Dorsolateral prefrontal cortex (tissue), 120 donors: ENCODE measurements at regions of chr14 and their contacts with region 1.

Region 1: DNA sequence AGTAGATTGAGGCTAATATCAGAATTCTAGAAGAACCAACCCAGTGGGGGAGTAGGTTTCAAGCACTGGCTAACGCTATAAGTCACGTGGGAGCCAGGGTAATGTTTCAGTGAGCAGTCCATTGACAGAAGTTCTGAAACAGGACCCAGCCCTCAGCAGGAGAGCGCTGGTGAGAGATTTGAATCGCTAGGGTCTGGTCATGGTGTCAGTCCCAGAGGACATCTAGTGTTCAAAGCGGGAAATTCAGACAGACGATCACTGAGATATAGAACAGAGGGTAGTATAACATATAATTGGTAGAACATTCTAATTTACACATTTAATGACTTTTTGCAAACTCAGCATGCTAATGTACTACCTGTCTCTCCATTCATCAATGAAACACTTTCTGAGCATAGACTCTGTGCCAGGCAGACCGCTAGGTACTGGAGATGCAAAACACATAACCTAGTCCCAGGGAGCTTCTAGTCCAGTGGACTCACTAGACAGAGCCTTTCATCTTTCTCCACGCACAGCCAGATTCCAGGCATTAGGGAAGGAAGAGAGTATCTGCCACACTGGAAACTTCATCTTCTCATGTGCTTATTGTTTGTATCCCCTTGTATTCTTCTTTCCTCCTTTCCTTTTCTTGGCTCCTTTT is 35.4 kb upstream of the RNASE3 start:
- DNase-seq: peak in 9 of 10 donors; percentile 17 to 76 (median 58)
- H3K4me3 ChIP-seq: no peak overlapping the region
- H3K27ac ChIP-seq: peak overlapping the region in 2 of 59 donors; percentile 36 to 45
- H3K27me3 ChIP-seq: peaks cover 0 to 14% (median 0%) of the 10 kb centered on the region in 45 donors
- CTCF ChIP-seq: peak; percentile 65 to 97 (median 89)

Region 2: DNA sequence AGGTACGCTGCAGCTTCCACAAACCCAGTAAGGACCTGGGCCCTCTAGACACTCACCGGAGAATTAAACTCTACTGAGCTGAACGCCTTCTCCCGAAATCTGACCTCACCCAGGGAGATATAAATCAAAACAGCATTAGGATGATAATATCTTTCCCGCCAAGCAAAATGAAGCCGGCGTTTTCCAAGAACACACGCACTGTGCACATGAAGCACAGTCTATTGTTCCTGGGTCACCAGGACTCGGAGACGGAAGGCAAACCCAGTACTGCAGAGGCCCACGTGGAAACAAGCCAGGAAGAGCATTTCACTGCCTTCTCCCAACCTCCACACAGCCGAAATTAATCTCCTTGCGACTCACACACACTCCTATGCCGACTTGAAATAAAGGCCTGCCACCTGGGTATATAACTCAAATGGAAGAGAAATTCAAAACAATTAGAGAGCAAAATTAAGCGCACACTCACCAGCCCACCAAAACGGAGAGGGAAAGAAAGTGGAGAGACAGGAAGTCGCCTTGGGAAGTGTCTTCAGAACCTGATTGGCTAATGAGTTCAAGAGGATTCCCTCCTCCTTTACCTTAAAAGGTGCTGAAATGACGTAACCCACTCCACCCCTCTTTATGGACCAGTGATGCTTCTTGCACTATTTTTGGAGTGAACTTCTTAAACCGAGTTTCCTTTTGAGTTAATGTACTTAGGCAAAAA is 522.8 kb before region 1 on chr14 and contains the start of gene CCNB1IP1:
- intact Hi-C with region 1: loop called in 1 of 2 experiments (anchors 10 kb)
- DNase-seq: peak in 7 of 10 donors; percentile 37 to 69 (median 47)
- H3K4me3 ChIP-seq: peak within 1 kb of the TSS; percentile 44 to 87 (median 74)
- H3K27ac ChIP-seq: peak within 1 kb of the TSS; percentile 44 to 93 (median 83)
- H3K27me3 ChIP-seq: no peaks in the 10 kb centered on the region
- CTCF ChIP-seq: peak in 7 of 56 donors; percentile 3 to 23 (median 12)
- total RNA-seq, gene CCNB1IP1: 23.9 to 53.0 (median 36.4) TPM

Region 3: DNA sequence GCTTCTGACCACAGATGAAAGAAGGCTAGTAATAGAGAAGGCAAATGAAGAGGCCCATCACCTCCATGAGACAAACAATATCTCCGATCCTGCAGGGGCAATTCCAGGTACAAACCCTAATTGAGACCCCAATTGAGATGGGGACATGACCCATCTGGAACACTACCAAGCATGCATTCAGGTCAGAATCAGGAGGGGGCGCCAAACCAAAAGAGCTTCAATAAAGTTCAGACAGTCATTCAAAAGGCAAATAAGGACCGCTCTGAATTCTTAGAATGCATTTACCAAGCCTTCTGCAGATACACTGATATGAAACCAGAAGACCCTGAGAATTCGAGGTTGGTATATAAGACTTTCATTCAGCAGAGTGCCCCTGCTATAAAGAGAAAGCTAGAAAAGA is 97.8 kb before region 1 on chr14:
- intact Hi-C with region 1: loop called in 1 of 2 experiments (anchors 5 kb)
- DNase-seq: peak in 3 of 10 donors; percentile 4 to 54 (median 15)
- H3K4me3 ChIP-seq: no peak overlapping the region
- H3K27ac ChIP-seq: no peak overlapping the region
- H3K27me3 ChIP-seq: peaks cover 0 to 6% (median 0%) of the 10 kb centered on the region in 45 donors
- CTCF ChIP-seq: peak in 51 of 56 donors; percentile 14 to 70 (median 40)

Region 4: GRCh38 chr14:21039585-21040369 is 184.0 kb after region 1 on chr14:
- intact Hi-C with region 1: loop called in 1 of 2 experiments (anchors 2 kb)
- DNase-seq: peak in 3 of 10 donors; percentile 24 to 68 (median 56)
- H3K4me3 ChIP-seq: peak overlapping the region in 31 of 59 donors; percentile 0 to 51 (median 25)
- H3K27ac ChIP-seq: peak overlapping the region; percentile 31 to 98 (median 92)
- H3K27me3 ChIP-seq: peaks cover 0 to 6% (median 0%) of the 10 kb centered on the region in 45 donors
- CTCF ChIP-seq: peak; percentile 27 to 92 (median 79)

Region 5: DNA sequence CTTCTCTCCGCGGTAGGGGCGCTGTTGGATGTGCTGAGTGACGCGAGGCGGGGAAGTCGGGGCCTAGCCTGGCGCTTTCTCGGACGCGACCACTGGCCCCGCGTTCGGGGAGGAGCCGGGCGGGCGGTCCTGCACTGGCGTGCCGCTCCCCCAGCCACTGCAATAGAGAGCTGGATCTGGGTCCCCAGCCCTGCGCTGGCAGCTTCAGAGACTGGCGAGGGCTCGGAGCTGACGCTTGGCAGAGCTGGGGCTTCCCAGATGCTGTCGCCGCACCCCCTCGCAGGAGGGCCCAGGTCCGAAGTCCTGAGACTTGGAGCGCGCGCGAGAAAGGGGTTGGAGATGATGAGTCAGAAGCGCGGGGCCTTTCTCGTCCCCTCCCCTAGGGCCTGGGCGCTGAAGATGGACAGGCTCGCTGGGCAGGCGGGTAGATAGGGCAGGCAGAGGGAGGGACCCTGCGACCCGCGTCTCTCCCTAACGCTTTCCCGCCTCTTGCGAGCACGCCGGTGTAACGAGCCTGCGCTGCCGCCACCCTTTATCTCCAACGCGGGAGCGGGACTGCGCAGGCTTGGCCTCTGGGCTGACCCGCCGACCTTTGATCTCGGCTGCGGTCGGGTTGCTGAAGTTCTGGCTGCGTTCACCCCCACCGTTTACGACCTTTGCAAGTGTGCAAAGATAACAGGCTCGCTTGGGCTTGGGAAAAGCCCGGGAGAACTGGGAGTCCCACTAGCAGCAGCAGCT is 248.1 kb after region 1 on chr14:
- intact Hi-C with region 1: loop called in 1 of 2 experiments (anchors 10 kb)
- DNase-seq: peak; percentile 92 to 99 (median 98)
- H3K4me3 ChIP-seq: peak overlapping the region; percentile 57 to 93 (median 79)
- H3K27ac ChIP-seq: peak overlapping the region; percentile 90 to 100 (median 99)
- H3K27me3 ChIP-seq: no peaks in the 10 kb centered on the region
- CTCF ChIP-seq: peak in 51 of 56 donors; percentile 12 to 83 (median 67)